Spleen (tissue), 13 donors: ENCODE measurements at regions of chr17 and their contacts with region 1.

Region 1: GRCh38 chr17:44775136-44775837 is 16.5 kb downstream of the ADAM11 start:
- DNase-seq: peak; percentile 99
- H3K4me3 ChIP-seq: peak overlapping the region; percentile 57 to 97 (median 70)
- H3K27ac ChIP-seq: peak overlapping the region in 5 of 8 donors; percentile 18 to 74 (median 57)
- H3K4me1 ChIP-seq: peaks cover 13 to 47% (median 32%) of the 10 kb centered on the region in 6 donors
- H3K27me3 ChIP-seq: peaks cover 0 to 74% (median 12%) of the 10 kb centered on the region in 7 donors
- CTCF ChIP-seq: peak in 3 of 11 experiments; percentile 1 to 21 (median 12)
- POLR2A ChIP-seq: no peak

Region 2: DNA sequence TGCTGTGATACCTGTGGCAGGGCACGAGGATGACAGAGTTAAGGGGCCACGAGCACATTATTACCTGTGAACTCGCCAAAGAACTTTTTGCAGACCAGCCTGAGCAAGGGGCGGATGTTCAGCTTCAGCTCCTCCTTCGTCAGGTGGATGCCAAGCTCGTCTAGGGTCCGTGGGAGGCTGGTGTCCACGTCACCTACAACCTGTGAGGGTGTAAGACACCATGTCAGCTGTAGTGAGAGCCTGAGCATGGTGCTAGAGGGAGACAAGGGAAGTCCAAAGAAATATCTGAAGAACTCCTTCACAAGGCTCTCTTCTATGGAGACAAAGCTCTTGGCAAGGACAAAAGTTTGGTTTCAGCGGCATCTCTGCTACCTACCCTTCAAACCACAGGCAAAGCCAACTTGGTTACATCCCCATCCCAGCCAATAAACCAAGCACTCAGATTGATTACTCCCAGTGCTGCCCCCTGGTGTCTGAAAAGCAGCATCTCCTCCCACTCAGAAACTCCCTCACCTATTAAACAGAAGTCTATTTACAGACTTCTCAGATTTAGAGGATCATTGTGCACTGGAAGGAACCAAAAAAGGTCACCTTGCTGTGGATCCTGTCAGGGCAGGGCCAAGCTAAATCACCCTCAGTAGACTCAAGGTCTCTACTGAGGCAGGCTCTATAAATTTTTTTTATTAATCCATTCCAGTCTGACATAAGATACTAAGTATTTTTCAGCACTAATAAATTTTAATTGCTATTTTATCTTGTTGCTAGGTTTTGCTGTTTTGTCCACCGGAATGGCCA is 89.8 kb after region 1 on chr17:
- intact Hi-C with region 1: loop called (anchors 5 kb)
- DNase-seq: peak; percentile 77
- H3K4me3 ChIP-seq: no peak overlapping the region
- H3K27ac ChIP-seq: no peak overlapping the region
- H3K4me1 ChIP-seq: peaks cover 0 to 18% (median 1%) of the 10 kb centered on the region in 6 donors
- H3K27me3 ChIP-seq: no peaks in the 10 kb centered on the region
- CTCF ChIP-seq: peak; percentile 74 to 91 (median 84)
- POLR2A ChIP-seq: no peak